ENCODE measurements at regions of chr2 and their contacts with region 1.

Region 1: DNA sequence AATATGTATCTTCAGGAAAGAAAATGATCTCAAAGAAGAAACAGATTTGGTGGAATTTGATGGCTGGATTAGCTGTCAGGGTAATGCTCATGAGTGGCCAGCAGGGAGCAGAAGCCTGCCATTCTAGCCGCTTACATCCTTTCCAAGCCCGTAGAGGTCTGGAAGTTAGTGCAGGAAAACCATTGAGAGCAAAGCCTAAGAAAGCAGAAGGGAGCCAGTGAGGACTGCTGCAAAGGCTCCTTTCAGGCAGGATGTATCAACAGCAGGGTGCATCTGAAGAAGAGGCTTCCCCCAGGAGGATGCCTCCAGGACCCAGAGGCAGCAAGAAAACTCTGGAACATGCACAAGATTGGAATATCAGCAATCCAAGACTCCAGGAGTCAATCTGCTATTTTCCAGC is 22.9 kb upstream of the LBH start:
- DNase-seq: peak; percentile 56
- H3K4me3 Mint-ChIP-seq: no peak overlapping the region
- H3K27ac Mint-ChIP-seq: peak overlapping the region; percentile 63
- H3K4me1 Mint-ChIP-seq: peaks cover 20% of the 10 kb centered on the region
- H3K27me3 Mint-ChIP-seq: peaks cover 23% of the 10 kb centered on the region

Region 2: GRCh38 chr2:29810956-29811355 is 397.5 kb before region 1 on chr2:
- CTCF ChIA-PET with region 1: no interaction called
- DNase-seq: no peak
- H3K4me3 Mint-ChIP-seq: no peak overlapping the region
- H3K27ac Mint-ChIP-seq: no peak overlapping the region
- H3K4me1 Mint-ChIP-seq: no peaks in the 10 kb centered on the region
- H3K27me3 Mint-ChIP-seq: peaks cover 6% of the 10 kb centered on the region

Region 3: GRCh38 chr2:30178618-30179434 is 29.6 kb before region 1 on chr2:
- CTCF ChIA-PET with region 1: no interaction called
- DNase-seq: no peak
- H3K4me3 Mint-ChIP-seq: no peak overlapping the region
- H3K27ac Mint-ChIP-seq: no peak overlapping the region
- H3K4me1 Mint-ChIP-seq: peaks cover 3% of the 10 kb centered on the region
- H3K27me3 Mint-ChIP-seq: peaks cover 15% of the 10 kb centered on the region

Region 4: DNA sequence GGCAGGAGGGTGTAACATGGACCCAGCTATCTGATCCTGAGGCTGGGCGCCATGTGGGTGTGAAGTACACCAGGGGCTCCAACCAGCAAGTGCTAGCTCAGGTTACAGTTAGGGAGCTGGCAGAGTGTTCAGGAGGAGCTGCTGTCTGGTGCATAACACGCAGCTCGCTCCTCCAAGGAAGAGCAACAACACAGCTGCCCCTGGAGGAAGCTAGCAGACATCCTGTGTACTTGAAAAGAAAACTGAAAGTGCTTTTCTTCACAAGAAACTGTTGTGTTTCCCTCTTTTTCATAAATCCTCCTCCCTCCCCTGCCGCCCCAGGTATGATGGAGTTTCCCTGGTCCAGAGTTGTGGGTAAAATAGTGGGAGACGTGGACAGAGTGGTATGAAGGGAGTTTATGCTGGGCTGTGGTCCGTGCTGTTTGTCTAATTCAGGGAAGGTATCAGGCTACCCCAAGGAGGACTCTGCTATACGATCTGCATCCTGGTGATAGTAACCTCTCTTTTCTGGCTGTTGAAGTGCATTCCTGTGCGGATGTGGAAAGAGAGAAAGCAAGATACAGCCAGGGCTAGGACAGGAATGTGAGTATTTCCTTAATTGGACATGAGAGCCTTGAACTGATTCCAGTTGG is 16.8 kb after region 1 on chr2:
- CTCF ChIA-PET with region 1: interaction called, 96 read pairs
- DNase-seq: peak; percentile 71
- H3K4me3 Mint-ChIP-seq: peak overlapping the region; percentile 80
- H3K27ac Mint-ChIP-seq: peak overlapping the region; percentile 94
- H3K4me1 Mint-ChIP-seq: peaks cover 66% of the 10 kb centered on the region
- H3K27me3 Mint-ChIP-seq: peaks cover 14% of the 10 kb centered on the region

Region 5: GRCh38 chr2:30231212-30231995 is 23.0 kb after region 1 on chr2 and contains the start of gene LBH:
- CTCF ChIA-PET with region 1: interaction called, 96 read pairs
- DNase-seq: peak; percentile 89
- H3K4me3 Mint-ChIP-seq: peak within 1 kb of the TSS; percentile 79
- H3K27ac Mint-ChIP-seq: peak within 1 kb of the TSS; percentile 97
- H3K4me1 Mint-ChIP-seq: peaks cover 61% of the 10 kb centered on the region
- H3K27me3 Mint-ChIP-seq: peaks cover 16% of the 10 kb centered on the region

Region 6: DNA sequence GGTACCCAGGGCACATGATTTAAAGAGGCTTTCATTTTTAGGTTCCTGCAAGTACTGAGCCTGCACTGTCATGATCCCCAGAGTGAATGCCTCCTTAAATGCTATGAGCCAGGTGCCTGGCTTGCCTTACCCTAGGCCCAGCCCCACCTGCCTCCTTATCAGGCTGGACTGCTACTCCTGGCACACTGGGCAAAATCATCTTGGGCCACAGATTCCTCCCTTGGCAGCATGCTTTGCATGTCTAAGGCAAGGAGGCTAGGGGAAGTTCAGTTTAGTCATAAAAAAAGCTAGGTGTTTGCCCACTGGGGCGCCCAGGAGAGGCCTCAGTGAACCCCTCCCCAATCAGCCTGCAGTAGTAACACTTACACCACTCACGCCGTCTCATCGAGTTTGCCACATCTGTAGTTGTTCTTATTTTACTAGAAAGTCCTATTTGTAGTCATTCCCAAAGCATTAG is 68.0 kb after region 1 on chr2:
- CTCF ChIA-PET with region 1: no interaction called
- DNase-seq: peak; percentile 16
- H3K4me3 Mint-ChIP-seq: no peak overlapping the region
- H3K27ac Mint-ChIP-seq: no peak overlapping the region
- H3K4me1 Mint-ChIP-seq: peaks cover 14% of the 10 kb centered on the region
- H3K27me3 Mint-ChIP-seq: peaks cover 14% of the 10 kb centered on the region

Region 7: DNA sequence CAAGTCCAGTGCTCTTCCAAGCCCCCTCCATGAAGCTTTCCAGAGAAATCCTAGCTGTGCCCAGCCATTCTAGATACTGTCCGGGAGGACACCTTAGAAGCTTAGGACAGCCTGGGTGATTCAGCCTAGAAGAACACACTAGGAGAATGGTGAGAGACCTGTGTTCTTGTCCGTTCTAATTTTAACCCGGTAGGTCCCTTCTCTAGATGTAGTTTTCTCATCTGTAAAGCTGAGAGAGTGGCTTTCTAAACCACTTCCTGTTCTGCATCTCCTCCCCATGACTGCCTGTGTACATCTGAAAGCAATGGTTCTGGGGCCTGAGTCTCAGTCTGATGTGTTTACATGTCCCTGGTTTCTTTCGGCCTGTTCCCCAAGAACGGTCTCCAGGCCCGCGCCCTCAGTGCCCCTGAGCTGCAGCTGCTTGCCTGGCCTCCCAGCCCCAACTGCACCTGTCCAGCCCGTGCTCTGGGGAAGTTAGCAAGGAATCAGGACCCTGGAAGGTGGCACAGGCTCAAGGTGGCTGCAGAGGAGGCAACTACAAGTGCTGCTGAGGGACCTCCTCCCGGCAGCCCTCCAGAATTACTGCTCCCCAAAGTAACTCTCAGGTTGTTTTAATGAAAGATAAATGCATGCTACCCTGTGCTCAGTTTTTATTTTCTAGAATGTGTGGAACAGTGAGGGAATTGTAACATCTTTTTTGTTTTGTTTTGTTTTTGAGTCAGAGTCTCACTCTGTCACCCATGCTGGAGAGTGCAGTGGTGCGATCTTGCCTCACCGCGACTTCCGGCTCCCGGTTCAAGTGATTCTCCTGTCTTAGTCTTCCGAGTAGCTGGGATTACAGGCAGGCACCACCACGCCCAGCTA is 128.8 kb after region 1 on chr2:
- CTCF ChIA-PET with region 1: interaction called, 30 read pairs
- DNase-seq: peak; percentile 74
- H3K4me3 Mint-ChIP-seq: peak overlapping the region; percentile 72
- H3K27ac Mint-ChIP-seq: peak overlapping the region; percentile 99
- H3K4me1 Mint-ChIP-seq: peaks cover 72% of the 10 kb centered on the region
- H3K27me3 Mint-ChIP-seq: no peaks in the 10 kb centered on the region

Region 8: DNA sequence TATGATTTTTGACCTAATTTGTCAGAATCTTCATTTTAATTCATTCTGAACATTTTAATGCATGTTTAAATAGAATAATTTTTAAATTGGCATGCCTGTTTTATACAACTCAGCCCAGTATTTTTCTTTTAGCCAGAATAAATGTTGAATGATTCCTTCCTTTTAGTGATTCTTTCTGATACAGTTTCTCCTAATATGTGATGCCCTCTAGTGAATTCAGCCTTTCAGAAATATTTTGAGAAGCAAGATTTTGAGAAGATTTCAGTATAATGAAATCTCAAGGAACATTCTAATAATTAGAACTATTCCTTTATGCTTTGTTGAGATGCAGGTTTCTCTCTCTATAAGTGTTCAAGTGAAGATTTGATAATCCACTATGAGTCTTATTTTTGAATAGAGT is 267.1 kb after region 1 on chr2:
- CTCF ChIA-PET with region 1: interaction called, 13 read pairs
- DNase-seq: no peak
- H3K4me3 Mint-ChIP-seq: no peak overlapping the region
- H3K27ac Mint-ChIP-seq: no peak overlapping the region
- H3K4me1 Mint-ChIP-seq: peaks cover 3% of the 10 kb centered on the region
- H3K27me3 Mint-ChIP-seq: no peaks in the 10 kb centered on the region

Region 9: DNA sequence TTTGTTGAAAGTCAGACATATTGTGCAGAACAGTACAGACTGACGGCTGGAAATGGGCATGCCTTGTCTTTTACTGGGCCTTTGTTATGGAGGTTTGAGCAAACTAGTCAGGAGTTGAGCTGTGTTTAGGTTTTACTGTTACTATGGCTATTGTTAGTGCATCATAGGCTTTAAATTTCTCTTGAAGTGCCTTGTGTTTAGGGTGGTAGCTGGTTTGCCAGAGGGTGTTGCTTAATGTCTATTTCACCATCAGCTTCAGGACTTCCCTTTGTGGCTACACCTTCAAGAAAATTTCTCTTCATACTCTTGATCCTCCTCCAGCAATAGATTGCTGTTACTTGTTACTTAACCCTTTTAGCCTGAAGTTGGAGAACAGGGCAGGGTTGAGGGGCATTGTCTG is 494.2 kb after region 1 on chr2:
- CTCF ChIA-PET with region 1: interaction called, 252 read pairs
- DNase-seq: no peak
- H3K4me3 Mint-ChIP-seq: no peak overlapping the region
- H3K27ac Mint-ChIP-seq: no peak overlapping the region
- H3K4me1 Mint-ChIP-seq: no peaks in the 10 kb centered on the region
- H3K27me3 Mint-ChIP-seq: peaks cover 11% of the 10 kb centered on the region

Measured in activated naive CD4-positive, alpha-beta T cell treated with anti-CD3 and anti-CD28 coated beads, Interleukin-2, amount 10 ng/mL, durations not matched to agents 7 days and 5 days (primary cell).